ENCODE measurements at regions of chr10 and their contacts with region 1.

Region 1: DNA sequence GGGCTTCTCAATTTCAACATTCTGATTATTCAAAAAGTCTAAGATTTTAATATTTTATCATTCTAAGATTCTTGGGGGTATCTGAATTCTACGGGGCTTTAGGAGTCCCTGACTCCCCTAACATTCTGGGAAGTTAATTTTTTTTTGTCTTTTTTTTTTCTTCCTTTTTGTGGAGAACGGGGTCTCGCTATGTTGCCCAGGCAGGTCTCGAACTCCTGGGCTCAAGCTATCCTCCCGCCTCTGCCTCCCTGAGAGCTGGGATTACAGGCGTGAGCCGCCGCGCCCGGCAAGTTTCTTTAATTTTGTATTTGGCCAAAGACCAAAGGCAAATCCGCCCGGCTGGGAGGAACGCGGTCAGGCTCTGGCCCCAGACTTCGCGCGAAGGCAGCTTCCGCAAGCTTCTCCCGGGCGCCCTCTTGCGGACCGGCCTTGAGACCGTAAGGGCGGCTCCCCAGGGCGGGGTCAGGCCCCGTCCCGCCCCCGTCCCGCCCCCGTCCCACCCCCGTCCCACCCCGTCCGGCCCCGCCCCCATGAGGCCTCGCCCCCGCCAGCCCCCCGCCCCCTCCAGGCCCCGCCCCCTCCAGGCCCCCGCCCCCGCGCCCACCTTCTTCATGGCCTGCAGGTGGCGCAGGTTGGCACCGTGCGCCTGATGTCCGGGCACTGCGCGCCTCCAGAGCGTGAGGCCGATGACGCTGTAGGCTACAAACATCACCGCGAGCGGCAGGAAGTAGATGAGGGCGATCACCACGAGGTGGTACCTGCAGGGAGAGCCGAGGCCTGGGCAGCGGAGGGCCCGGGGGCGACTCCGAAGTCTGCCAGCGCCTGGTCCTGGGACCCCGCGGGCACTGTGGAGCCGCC is 8.2 kb downstream of the TACR2 start:
- DNase-seq: peak; percentile 81 to 95
- H3K4me3 ChIP-seq: peak overlapping the region in 1 of 4 experiments; percentile 47; a peak in 2 of 8 replicates
- H3K27ac ChIP-seq: no peak overlapping the region
- H3K4me1 ChIP-seq: peaks cover 0 to 10% (median 7%) of the 10 kb centered on the region in 4 experiments; a peak in 6 of 7 replicates
- H3K27me3 ChIP-seq: no peaks in the 10 kb centered on the region
- CTCF ChIP-seq: peak; percentile 43 to 71 (median 64)
- EP300 ChIP-seq: no peak
- POLR2A ChIP-seq: no peak
- RAD21 ChIP-seq: peak; percentile 37

Region 2: DNA sequence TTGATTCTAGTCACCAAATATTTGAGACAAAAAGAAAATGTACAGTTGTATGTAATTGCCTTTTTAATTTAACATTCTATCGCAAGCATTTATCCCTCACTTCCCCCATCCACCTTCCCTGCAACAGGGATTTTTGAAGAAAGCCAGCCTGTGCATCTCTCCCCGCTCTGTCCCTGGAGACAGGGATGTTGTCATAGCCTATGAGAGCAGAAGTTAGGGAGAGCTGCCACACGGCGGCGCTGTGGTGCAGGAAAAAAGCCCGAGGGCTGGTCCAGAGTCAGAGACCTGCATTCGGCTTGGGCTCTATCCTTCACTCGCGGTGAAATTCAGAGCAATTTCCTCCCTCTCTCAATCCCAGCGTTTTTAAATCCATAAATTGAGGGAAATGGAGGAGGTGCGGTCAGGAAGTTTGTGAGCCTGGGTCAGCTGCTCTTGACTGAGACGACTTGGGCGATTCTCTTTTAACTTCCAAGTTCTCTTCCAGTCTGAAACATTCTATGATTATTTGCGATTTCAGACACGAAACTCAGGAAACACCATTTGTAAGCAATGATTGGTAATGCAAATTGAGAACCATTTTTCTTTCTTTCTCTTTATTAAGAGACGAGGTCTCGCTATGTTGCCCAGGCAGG is 170.9 kb before region 1 on chr10:
- CTCF ChIA-PET with region 1: interaction called, 66 read pairs
- POLR2A ChIA-PET with region 1: interaction called, 4 read pairs
- DNase-seq: peak; percentile 71 to 98
- H3K4me3 ChIP-seq: no peak overlapping the region
- H3K27ac ChIP-seq: no peak overlapping the region
- H3K4me1 ChIP-seq: peaks cover 0 to 7% (median under 1%) of the 10 kb centered on the region in 4 experiments; a peak in 4 of 7 replicates
- H3K27me3 ChIP-seq: no peaks in the 10 kb centered on the region
- CTCF ChIP-seq: peak; percentile 86 to 97 (median 94)
- EP300 ChIP-seq: no peak
- POLR2A ChIP-seq: no peak
- RAD21 ChIP-seq: peak; percentile 99

Region 3: GRCh38 chr10:69383558-69383957 is 25.0 kb before region 1 on chr10:
- CTCF ChIA-PET with region 1: interaction called, 69 read pairs
- POLR2A ChIA-PET with region 1: no interaction called
- DNase-seq: no peak
- H3K4me3 ChIP-seq: no peak overlapping the region
- H3K27ac ChIP-seq: no peak overlapping the region
- H3K4me1 ChIP-seq: 0 out of 7 replicates have a peak, but pooled peaks cover 0 to 2% (median 0%) of the 10 kb centered on the region in 4 experiments
- H3K27me3 ChIP-seq: no peaks in the 10 kb centered on the region
- CTCF ChIP-seq: 0 out of 4 replicates have a peak, but pooled peaks of 1 of the 3 experiments have one; percentile 5
- EP300 ChIP-seq: no peak
- POLR2A ChIP-seq: no peak
- RAD21 ChIP-seq: no peak

Region 4: DNA sequence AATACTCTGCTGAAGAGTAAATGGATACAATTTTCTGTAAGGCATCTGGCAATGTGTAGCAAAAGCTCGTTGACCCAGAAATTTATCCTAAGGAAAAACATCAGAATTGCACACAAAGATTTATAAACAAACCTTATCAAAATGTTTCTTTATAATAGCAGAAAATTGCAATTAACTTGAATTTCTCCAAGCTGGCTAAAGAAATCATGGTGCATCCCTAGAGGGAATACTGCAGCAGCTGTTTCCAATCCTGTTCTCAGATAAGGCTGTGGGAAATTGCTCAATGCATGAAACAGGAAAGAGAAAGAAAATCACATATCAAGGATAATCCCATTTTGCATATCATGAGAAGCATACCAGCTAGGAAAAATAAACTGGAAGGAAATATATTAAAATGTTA is 10.6 kb before region 1 on chr10:
- CTCF ChIA-PET with region 1: interaction called, 69 read pairs
- POLR2A ChIA-PET with region 1: interaction called, 6 read pairs
- DNase-seq: no peak
- H3K4me3 ChIP-seq: no peak overlapping the region
- H3K27ac ChIP-seq: no peak overlapping the region
- H3K4me1 ChIP-seq: no peaks in the 10 kb centered on the region; a peak in 1 of 7 replicates
- H3K27me3 ChIP-seq: no peaks in the 10 kb centered on the region
- CTCF ChIP-seq: no peak
- EP300 ChIP-seq: no peak
- POLR2A ChIP-seq: no peak
- RAD21 ChIP-seq: no peak

Region 5: DNA sequence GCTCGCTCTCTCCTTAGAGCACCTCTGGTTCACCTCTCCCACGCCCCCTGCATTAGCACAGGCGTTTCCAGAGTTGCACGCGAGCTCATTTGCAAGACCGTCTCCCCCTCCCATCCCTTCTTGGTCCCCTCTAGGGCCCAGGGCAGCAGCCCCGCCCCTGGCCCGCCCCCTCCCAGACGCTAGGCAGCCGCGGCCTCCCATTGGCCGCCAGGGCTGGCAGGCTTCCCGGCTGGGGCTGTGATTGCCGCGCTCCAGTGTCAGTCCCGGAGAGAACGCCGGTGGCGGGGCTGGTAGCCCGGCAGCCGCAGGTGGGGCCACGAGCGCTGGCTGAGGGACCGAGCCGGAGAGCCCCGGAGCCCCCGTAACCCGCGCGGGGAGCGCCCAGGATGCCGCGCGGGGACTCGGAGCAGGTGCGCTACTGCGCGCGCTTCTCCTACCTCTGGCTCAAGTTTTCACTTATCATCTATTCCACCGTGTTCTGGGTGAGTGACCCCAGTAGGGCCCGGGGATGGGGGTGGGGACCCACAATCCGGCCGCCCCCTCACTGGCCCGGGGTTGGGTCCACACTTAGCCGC is 42.7 kb after region 1 on chr10 and contains the start of gene TSPAN15:
- CTCF ChIA-PET with region 1: interaction called, 31 read pairs
- POLR2A ChIA-PET with region 1: interaction called, 5 read pairs
- DNase-seq: peak; percentile 88 to 91
- H3K4me3 ChIP-seq: peak within 1 kb of the TSS; percentile 56 to 91 (median 62)
- H3K27ac ChIP-seq: no peak within 1 kb of the TSS
- H3K4me1 ChIP-seq: peaks cover 0 to 10% (median 4%) of the 10 kb centered on the region in 4 experiments; a peak in 5 of 7 replicates
- H3K27me3 ChIP-seq: peaks cover 8 to 26% (median 16%) of the 10 kb centered on the region in 4 experiments
- CTCF ChIP-seq: no peak
- EP300 ChIP-seq: no peak
- POLR2A ChIP-seq: no peak
- RAD21 ChIP-seq: no peak
- total RNA-seq, gene TSPAN15: 9.7 and 11.6 TPM in 2 replicates

Region 6: GRCh38 chr10:69639291-69640195 is 231.0 kb after region 1 on chr10:
- CTCF ChIA-PET with region 1: interaction called, 22 read pairs
- POLR2A ChIA-PET with region 1: interaction called, 3 read pairs
- DNase-seq: peak in 1 of 2 experiments; percentile 80
- H3K4me3 ChIP-seq: no peak overlapping the region
- H3K27ac ChIP-seq: no peak overlapping the region
- H3K4me1 ChIP-seq: peaks cover 4 to 9% (median 7%) of the 10 kb centered on the region in 4 experiments
- H3K27me3 ChIP-seq: no peaks in the 10 kb centered on the region
- CTCF ChIP-seq: peak; percentile 64 to 97 (median 89)
- EP300 ChIP-seq: 0 out of 3 replicates have a peak, but pooled peaks of 1 of the 2 experiments have one; percentile 33
- POLR2A ChIP-seq: no peak
- RAD21 ChIP-seq: peak; percentile 98 to 99